ENCODE measurements at regions of chr9 and their contacts with region 1.

Region 1: GRCh38 chr9:129110740-129111527 is at the starts of genes CRAT and PTPA:
- DNase-seq: peak; percentile 91 to 97 (median 96)
- ATAC-seq: peak; percentile 88
- H3K4me3 ChIP-seq: peak within 1 kb of the TSS; percentile 69 to 85
- H3K4me3 Mint-ChIP-seq: peak within 1 kb of the TSS; percentile 93
- H3K27ac ChIP-seq: peak within 1 kb of the TSS; percentile 79 to 81
- H3K27ac Mint-ChIP-seq: peak within 1 kb of the TSS; percentile 91
- H3K4me1 ChIP-seq: peaks cover 21% of the 10 kb centered on the region
- H3K4me1 Mint-ChIP-seq: peaks cover 39% of the 10 kb centered on the region
- H3K27me3 ChIP-seq: no peaks in the 10 kb centered on the region
- H3K27me3 Mint-ChIP-seq: no peaks in the 10 kb centered on the region
- CTCF ChIP-seq: no peak
- total RNA-seq, gene CRAT: 5.6 to 6.3 TPM
- total RNA-seq, gene PTPA: 24.7 to 26.8 TPM

Region 2: GRCh38 chr9:127715394-127716337 is 1395.3 kb before region 1 on chr9 and contains the starts of genes PTRH1 and TTC16:
- CTCF ChIA-PET with region 1: no interaction called
- POLR2A ChIA-PET with region 1: no interaction called
- intact Hi-C with region 1: loop called in 1 of 2 experiments (anchors 5 kb)
- DNase-seq: peak; percentile 88 to 98 (median 97)
- ATAC-seq: peak; percentile 93
- H3K4me3 ChIP-seq: peak within 1 kb of the TSS; percentile 88 to 96
- H3K4me3 Mint-ChIP-seq: peak within 1 kb of the TSS; percentile 98
- H3K27ac ChIP-seq: peak within 1 kb of the TSS; percentile 80 to 83
- H3K27ac Mint-ChIP-seq: peak within 1 kb of the TSS; percentile 96
- H3K4me1 ChIP-seq: peaks cover 47% of the 10 kb centered on the region
- H3K4me1 Mint-ChIP-seq: peaks cover 44% of the 10 kb centered on the region
- H3K27me3 ChIP-seq: no peaks in the 10 kb centered on the region
- H3K27me3 Mint-ChIP-seq: no peaks in the 10 kb centered on the region
- CTCF ChIP-seq: no peak
- total RNA-seq, gene PTRH1: 4.6 to 5.3 TPM
- total RNA-seq, gene TTC16: 5.2 to 5.5 TPM

Region 3: GRCh38 chr9:128225770-128226407 is 885.0 kb before region 1 on chr9:
- CTCF ChIA-PET with region 1: no interaction called
- POLR2A ChIA-PET with region 1: no interaction called
- intact Hi-C with region 1: no loop called
- DNase-seq: no peak
- ATAC-seq: no peak
- H3K4me3 ChIP-seq: no peak overlapping the region
- H3K4me3 Mint-ChIP-seq: no peak overlapping the region
- H3K27ac ChIP-seq: no peak overlapping the region
- H3K27ac Mint-ChIP-seq: no peak overlapping the region
- H3K4me1 ChIP-seq: no peaks in the 10 kb centered on the region
- H3K4me1 Mint-ChIP-seq: no peaks in the 10 kb centered on the region
- H3K27me3 ChIP-seq: no peaks in the 10 kb centered on the region
- H3K27me3 Mint-ChIP-seq: no peaks in the 10 kb centered on the region
- CTCF ChIP-seq: no peak

Region 4: DNA sequence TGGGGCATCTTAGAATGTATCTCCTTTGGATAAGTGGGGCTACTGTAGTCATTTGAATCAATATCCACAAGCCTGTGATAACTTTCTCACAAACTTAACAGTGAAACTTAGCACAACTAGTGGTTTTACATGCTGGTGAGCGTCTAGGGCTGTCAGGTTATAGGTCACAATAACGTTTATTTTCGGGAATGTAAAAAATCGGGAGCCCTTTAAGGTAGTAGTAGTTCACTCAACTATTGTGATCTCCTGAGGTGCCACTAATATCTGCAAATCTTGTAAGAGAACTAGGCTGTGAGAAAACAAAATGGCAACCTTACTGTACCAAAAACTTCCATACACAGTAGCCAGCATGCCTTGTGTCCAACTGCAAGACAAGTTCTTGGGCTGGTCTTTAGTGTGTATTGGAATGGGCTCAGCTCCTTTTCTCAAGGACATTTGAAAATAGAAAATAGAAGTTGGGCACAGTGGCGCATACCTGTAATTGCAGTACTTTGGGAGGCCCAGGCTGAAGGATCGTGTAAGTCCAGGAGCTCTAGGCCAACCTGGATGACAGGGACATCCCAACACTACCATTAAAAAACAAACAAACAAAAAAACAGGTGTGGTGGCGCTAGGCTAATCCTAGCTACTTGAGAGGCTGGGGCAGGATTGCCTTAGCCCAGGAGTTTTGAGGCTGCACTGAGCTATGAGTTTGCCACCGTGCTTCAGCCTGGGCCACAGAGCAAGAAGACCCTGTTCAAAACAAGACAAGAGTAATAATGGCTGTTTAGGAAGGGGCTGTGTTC is 413.8 kb before region 1 on chr9:
- CTCF ChIA-PET with region 1: no interaction called
- POLR2A ChIA-PET with region 1: no interaction called
- intact Hi-C with region 1: no loop called
- DNase-seq: no peak
- ATAC-seq: no peak
- H3K4me3 ChIP-seq: no peak overlapping the region
- H3K4me3 Mint-ChIP-seq: no peak overlapping the region
- H3K27ac ChIP-seq: no peak overlapping the region
- H3K27ac Mint-ChIP-seq: peak overlapping the region; percentile 69
- H3K4me1 ChIP-seq: peaks cover 11% of the 10 kb centered on the region
- H3K4me1 Mint-ChIP-seq: peaks cover 11% of the 10 kb centered on the region
- H3K27me3 ChIP-seq: no peaks in the 10 kb centered on the region
- H3K27me3 Mint-ChIP-seq: no peaks in the 10 kb centered on the region
- CTCF ChIP-seq: no peak

Region 5: GRCh38 chr9:129028192-129028957 is 82.6 kb before region 1 on chr9 and contains the start of gene SH3GLB2:
- CTCF ChIA-PET with region 1: interaction called, 3 read pairs
- POLR2A ChIA-PET with region 1: interaction called, 3 read pairs
- intact Hi-C with region 1: loop called (anchors 1 to 2 kb)
- DNase-seq: peak; percentile 88 to 97 (median 94)
- ATAC-seq: peak; percentile 92
- H3K4me3 ChIP-seq: peak within 1 kb of the TSS; percentile 51 to 61
- H3K4me3 Mint-ChIP-seq: peak within 1 kb of the TSS; percentile 83
- H3K27ac ChIP-seq: peak within 1 kb of the TSS; percentile 40 to 62
- H3K27ac Mint-ChIP-seq: peak within 1 kb of the TSS; percentile 64
- H3K4me1 ChIP-seq: peaks cover 13% of the 10 kb centered on the region
- H3K4me1 Mint-ChIP-seq: peaks cover 24% of the 10 kb centered on the region
- H3K27me3 ChIP-seq: no peaks in the 10 kb centered on the region
- H3K27me3 Mint-ChIP-seq: no peaks in the 10 kb centered on the region
- CTCF ChIP-seq: no peak
- total RNA-seq, gene SH3GLB2: 64.9 to 68.3 TPM

Region 6: GRCh38 chr9:129036241-129036922 is 74.6 kb before region 1 on chr9 and contains the start of gene MIGA2:
- CTCF ChIA-PET with region 1: interaction called, 3 read pairs
- POLR2A ChIA-PET with region 1: no interaction called
- intact Hi-C with region 1: loop called (anchors 1 to 2 kb)
- DNase-seq: peak; percentile 85 to 99 (median 94)
- ATAC-seq: peak; percentile 94
- H3K4me3 ChIP-seq: peak within 1 kb of the TSS; percentile 99
- H3K4me3 Mint-ChIP-seq: peak within 1 kb of the TSS; percentile 98
- H3K27ac ChIP-seq: peak within 1 kb of the TSS; percentile 68 to 83
- H3K27ac Mint-ChIP-seq: peak within 1 kb of the TSS; percentile 85
- H3K4me1 ChIP-seq: peaks cover 21% of the 10 kb centered on the region
- H3K4me1 Mint-ChIP-seq: peaks cover 36% of the 10 kb centered on the region
- H3K27me3 ChIP-seq: no peaks in the 10 kb centered on the region
- H3K27me3 Mint-ChIP-seq: no peaks in the 10 kb centered on the region
- CTCF ChIP-seq: no peak
- total RNA-seq, gene MIGA2: 63.5 to 69.0 TPM

Region 7: GRCh38 chr9:129080602-129081387 is 30.1 kb before region 1 on chr9 and contains the start of gene DOLPP1:
- CTCF ChIA-PET with region 1: no interaction called
- POLR2A ChIA-PET with region 1: interaction called, 5 read pairs
- intact Hi-C with region 1: loop called (anchors 1 kb)
- DNase-seq: peak; percentile 97 to 99 (median 98)
- ATAC-seq: peak; percentile 92
- H3K4me3 ChIP-seq: peak within 1 kb of the TSS; percentile 79 to 85
- H3K4me3 Mint-ChIP-seq: peak within 1 kb of the TSS; percentile 89
- H3K27ac ChIP-seq: peak within 1 kb of the TSS; percentile 64 to 76
- H3K27ac Mint-ChIP-seq: peak within 1 kb of the TSS; percentile 81
- H3K4me1 ChIP-seq: peaks cover 30% of the 10 kb centered on the region
- H3K4me1 Mint-ChIP-seq: peaks cover 20% of the 10 kb centered on the region
- H3K27me3 ChIP-seq: no peaks in the 10 kb centered on the region
- H3K27me3 Mint-ChIP-seq: no peaks in the 10 kb centered on the region
- CTCF ChIP-seq: no peak
- total RNA-seq, gene DOLPP1: 4.6 to 5.1 TPM

Region 8: DNA sequence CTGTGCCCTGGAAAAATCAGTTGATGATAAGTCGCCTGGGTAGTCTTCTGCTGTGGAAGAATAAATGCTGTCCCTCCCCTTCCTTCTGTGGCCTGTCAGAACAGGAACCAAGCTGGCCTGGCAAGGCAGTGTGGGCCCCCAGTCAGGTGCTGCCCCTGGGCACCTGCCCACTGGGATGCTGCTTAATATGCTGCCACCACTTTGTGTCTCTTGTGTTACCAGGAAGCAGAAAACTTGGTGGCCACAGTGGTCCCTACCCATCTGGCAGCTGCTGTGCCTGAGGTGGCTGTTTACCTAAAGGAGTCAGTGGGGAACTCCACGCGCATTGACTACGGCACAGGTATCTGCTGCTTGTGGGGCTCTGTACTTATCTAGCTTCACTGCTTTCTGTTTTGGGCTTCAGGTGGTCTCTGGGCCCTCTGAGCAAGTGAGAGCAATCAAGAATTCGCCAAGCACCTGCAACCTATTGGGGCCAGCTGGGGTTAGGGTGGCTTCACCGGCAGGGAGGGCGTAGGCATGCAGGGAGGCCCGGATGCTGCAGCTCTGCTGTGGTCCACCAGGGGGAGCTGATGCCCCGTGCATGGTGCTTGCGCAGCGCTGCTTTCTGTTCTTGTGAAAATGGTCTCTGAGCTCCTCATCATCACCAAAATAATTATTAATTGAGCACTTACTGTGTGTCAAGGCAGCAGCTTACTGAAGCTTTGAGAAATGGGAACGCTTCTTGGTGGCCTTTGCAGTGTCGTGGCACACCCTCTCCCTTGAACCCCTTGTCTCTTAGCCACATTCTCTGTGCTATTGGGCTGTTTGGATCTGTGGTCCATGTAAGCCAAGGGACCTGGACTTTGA is 20.6 kb after region 1 on chr9:
- CTCF ChIA-PET with region 1: interaction called, 31 read pairs
- POLR2A ChIA-PET with region 1: interaction called, 3 read pairs
- intact Hi-C with region 1: no loop called
- DNase-seq: peak; percentile 77 to 92 (median 85)
- ATAC-seq: peak; percentile 100
- H3K4me3 ChIP-seq: no peak overlapping the region
- H3K4me3 Mint-ChIP-seq: no peak overlapping the region
- H3K27ac ChIP-seq: peak overlapping the region in 1 of 2 experiments; percentile 1
- H3K27ac Mint-ChIP-seq: peak overlapping the region; percentile 41
- H3K4me1 ChIP-seq: peaks cover 3% of the 10 kb centered on the region
- H3K4me1 Mint-ChIP-seq: peaks cover 5% of the 10 kb centered on the region
- H3K27me3 ChIP-seq: no peaks in the 10 kb centered on the region
- H3K27me3 Mint-ChIP-seq: no peaks in the 10 kb centered on the region
- CTCF ChIP-seq: peak; percentile 96

Region 9: GRCh38 chr9:129641746-129642513 is 531.0 kb after region 1 on chr9 and contains the start of gene ASB6:
- CTCF ChIA-PET with region 1: no interaction called
- POLR2A ChIA-PET with region 1: no interaction called
- intact Hi-C with region 1: loop called in 1 of 2 experiments (anchors 1 kb)
- DNase-seq: peak; percentile 78 to 97 (median 93)
- ATAC-seq: peak; percentile 76
- H3K4me3 ChIP-seq: peak within 1 kb of the TSS; percentile 98 to 99
- H3K4me3 Mint-ChIP-seq: peak within 1 kb of the TSS; percentile 85
- H3K27ac ChIP-seq: peak within 1 kb of the TSS; percentile 68 to 80
- H3K27ac Mint-ChIP-seq: peak within 1 kb of the TSS; percentile 89
- H3K4me1 ChIP-seq: peaks cover 23% of the 10 kb centered on the region
- H3K4me1 Mint-ChIP-seq: peaks cover 24% of the 10 kb centered on the region
- H3K27me3 ChIP-seq: no peaks in the 10 kb centered on the region
- H3K27me3 Mint-ChIP-seq: no peaks in the 10 kb centered on the region
- CTCF ChIP-seq: peak; percentile 100
- total RNA-seq, gene ASB6: 39.9 to 42.0 TPM

Region 10: GRCh38 chr9:129863059-129863690 is 752.2 kb after region 1 on chr9:
- CTCF ChIA-PET with region 1: no interaction called
- POLR2A ChIA-PET with region 1: no interaction called
- intact Hi-C with region 1: no loop called
- DNase-seq: peak in 8 of 9 experiments; percentile 64 to 87 (median 76)
- ATAC-seq: peak; percentile 65
- H3K4me3 ChIP-seq: peak overlapping the region in 1 of 2 experiments; percentile 3
- H3K4me3 Mint-ChIP-seq: peak overlapping the region; percentile 56
- H3K27ac ChIP-seq: peak overlapping the region in 1 of 2 experiments; percentile 54
- H3K27ac Mint-ChIP-seq: peak overlapping the region; percentile 89
- H3K4me1 ChIP-seq: peaks cover 69% of the 10 kb centered on the region
- H3K4me1 Mint-ChIP-seq: peaks cover 63% of the 10 kb centered on the region
- H3K27me3 ChIP-seq: no peaks in the 10 kb centered on the region
- H3K27me3 Mint-ChIP-seq: no peaks in the 10 kb centered on the region
- CTCF ChIP-seq: no peak